Adrenal gland (tissue), 19 donors: ENCODE measurements at regions of chr12 and their contacts with region 1.

Region 1: GRCh38 chr12:66269757-66270383 is 32.4 kb upstream of the HELB start:
- DNase-seq: peak in 3 of 7 donors; percentile 18 to 22 (median 20)
- H3K4me3 ChIP-seq: no peak overlapping the region
- H3K27ac ChIP-seq: no peak overlapping the region
- H3K4me1 ChIP-seq: no peaks in the 10 kb centered on the region
- H3K27me3 ChIP-seq: no peaks in the 10 kb centered on the region
- CTCF ChIP-seq: peak; percentile 38 to 72 (median 60)
- POLR2A ChIP-seq: no peak

Region 2: GRCh38 chr12:65977384-65977783 is 292.5 kb before region 1 on chr12:
- intact Hi-C with region 1: no loop called
- DNase-seq: no peak
- H3K4me3 ChIP-seq: no peak overlapping the region
- H3K27ac ChIP-seq: no peak overlapping the region
- H3K4me1 ChIP-seq: no peaks in the 10 kb centered on the region
- H3K27me3 ChIP-seq: no peaks in the 10 kb centered on the region
- CTCF ChIP-seq: no peak
- POLR2A ChIP-seq: no peak

Region 3: GRCh38 chr12:66409195-66409871 is 139.5 kb after region 1 on chr12:
- intact Hi-C with region 1: loop called in 1 of 2 experiments (anchors 5 kb)
- DNase-seq: peak in 5 of 7 donors; percentile 21 to 48 (median 28)
- H3K4me3 ChIP-seq: no peak overlapping the region
- H3K27ac ChIP-seq: no peak overlapping the region
- H3K4me1 ChIP-seq: no peaks in the 10 kb centered on the region
- H3K27me3 ChIP-seq: no peaks in the 10 kb centered on the region
- CTCF ChIP-seq: peak; percentile 39 to 78 (median 66)
- POLR2A ChIP-seq: no peak

Region 4: DNA sequence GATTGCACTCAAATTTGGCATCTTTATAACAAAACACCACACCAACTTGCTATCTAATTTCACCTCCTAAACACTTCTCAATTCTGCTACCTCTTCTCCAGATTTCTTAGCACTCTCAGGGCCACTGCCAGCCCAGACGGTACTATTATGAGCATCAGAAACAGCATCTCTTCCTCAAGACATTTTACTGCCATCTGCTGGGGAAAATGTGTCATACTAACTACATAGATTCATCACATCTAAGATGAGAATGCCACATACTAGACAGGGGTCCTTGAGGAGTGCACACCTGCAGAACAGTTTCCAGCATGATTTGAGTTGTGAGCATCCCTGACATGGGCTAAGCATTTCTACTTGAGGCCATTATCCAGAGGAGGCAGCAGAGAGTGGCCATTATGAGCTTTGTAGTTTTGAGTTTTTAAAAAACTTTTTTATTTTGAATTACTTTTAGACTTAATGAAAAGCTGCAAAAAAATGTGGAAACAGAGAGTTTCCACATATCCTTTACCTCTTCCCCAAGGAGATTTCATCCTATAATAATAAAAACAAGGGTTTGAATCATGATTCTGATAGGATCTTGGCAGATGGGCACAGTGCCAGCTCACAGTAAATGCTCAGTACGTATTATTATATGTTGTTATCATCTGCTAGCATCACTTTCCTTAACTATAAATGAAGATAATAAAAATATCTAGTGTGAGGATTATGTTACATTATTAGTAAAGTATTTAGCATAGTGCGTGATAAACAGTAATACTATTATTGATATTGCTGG is 424.2 kb after region 1 on chr12:
- intact Hi-C with region 1: loop called in 1 of 2 experiments (anchors 10 kb)
- DNase-seq: peak in 4 of 7 donors; percentile 9 to 21 (median 20)
- H3K4me3 ChIP-seq: no peak overlapping the region
- H3K27ac ChIP-seq: no peak overlapping the region
- H3K4me1 ChIP-seq: no peaks in the 10 kb centered on the region
- H3K27me3 ChIP-seq: no peaks in the 10 kb centered on the region
- CTCF ChIP-seq: peak; percentile 37 to 63 (median 54)
- POLR2A ChIP-seq: no peak